ENCODE measurements at regions of chr2 and their contacts with region 1.

Region 1: DNA sequence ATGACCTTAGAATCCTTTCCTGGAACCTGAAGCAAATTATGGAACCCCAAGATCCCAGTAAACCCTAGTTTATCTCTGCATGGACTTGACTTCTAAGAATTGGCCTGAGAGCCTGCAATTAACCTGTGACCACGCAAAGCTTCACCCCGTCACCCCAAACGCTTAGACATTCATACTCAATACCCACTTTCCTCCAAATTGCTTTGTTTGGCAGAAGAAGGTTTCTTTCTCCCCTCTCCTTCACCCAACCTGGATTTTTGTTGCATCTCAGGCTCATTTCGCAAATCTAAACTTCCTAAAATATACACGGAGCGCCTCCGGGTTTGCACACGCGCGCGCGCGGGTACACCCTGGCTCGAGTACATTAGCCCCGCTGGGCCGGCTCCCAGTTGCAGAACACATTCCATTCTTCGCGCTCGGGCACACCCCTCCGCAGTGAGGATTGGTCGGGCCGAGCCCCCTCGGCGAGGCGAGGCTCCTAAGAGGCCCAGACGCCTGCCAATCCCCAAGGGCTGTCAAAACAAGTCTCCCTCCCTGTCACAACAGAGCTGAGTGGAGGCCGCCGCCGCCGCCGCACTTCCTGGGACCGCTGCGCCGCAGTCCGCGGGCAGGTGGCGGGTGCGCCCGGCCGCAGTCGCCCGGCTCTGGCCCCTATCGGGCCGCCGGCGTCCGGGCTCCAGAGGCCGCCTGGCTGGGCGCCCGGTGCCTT is at the start of gene PLCL1:
- DNase-seq: peak; percentile 89
- H3K4me3 ChIP-seq: peak within 1 kb of the TSS; percentile 66
- H3K27ac ChIP-seq: no peak within 1 kb of the TSS
- H3K4me1 ChIP-seq: peaks cover 4% of the 10 kb centered on the region
- CTCF ChIP-seq: no peak
- total RNA-seq, gene PLCL1: 0.03 and 0.08 TPM in 2 replicates

Region 2: DNA sequence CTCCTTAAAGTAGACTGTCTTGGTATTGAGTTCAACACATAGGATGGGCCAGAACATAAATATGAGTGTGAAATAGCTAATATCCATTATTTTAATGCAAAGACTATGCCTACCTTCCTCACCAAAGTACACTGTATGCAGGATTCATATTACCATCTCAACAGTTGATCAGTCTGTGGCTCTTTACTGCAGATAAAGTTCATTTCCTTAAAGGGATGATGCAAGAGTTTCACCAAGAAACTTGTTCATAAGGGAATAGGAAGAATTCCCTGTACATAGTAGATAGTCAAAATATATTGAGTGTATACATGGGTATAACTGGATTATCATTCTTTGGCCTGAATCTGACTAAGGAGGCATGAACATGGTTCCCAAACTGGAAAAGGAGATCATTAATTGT is 64.0 kb before region 1 on chr2:
- CTCF ChIA-PET with region 1: no interaction called
- POLR2A ChIA-PET with region 1: no interaction called
- intact Hi-C with region 1: no loop called
- DNase-seq: no peak
- H3K4me3 ChIP-seq: no peak overlapping the region
- H3K27ac ChIP-seq: no peak overlapping the region
- H3K4me1 ChIP-seq: no peaks in the 10 kb centered on the region
- CTCF ChIP-seq: no peak

Region 3: GRCh38 chr2:197777823-197778407 is 26.3 kb before region 1 on chr2:
- CTCF ChIA-PET with region 1: no interaction called
- POLR2A ChIA-PET with region 1: no interaction called
- intact Hi-C with region 1: no loop called
- DNase-seq: peak; percentile 47
- H3K4me3 ChIP-seq: no peak overlapping the region
- H3K27ac ChIP-seq: no peak overlapping the region
- H3K4me1 ChIP-seq: no peaks in the 10 kb centered on the region
- CTCF ChIP-seq: peak; percentile 98

Region 4: DNA sequence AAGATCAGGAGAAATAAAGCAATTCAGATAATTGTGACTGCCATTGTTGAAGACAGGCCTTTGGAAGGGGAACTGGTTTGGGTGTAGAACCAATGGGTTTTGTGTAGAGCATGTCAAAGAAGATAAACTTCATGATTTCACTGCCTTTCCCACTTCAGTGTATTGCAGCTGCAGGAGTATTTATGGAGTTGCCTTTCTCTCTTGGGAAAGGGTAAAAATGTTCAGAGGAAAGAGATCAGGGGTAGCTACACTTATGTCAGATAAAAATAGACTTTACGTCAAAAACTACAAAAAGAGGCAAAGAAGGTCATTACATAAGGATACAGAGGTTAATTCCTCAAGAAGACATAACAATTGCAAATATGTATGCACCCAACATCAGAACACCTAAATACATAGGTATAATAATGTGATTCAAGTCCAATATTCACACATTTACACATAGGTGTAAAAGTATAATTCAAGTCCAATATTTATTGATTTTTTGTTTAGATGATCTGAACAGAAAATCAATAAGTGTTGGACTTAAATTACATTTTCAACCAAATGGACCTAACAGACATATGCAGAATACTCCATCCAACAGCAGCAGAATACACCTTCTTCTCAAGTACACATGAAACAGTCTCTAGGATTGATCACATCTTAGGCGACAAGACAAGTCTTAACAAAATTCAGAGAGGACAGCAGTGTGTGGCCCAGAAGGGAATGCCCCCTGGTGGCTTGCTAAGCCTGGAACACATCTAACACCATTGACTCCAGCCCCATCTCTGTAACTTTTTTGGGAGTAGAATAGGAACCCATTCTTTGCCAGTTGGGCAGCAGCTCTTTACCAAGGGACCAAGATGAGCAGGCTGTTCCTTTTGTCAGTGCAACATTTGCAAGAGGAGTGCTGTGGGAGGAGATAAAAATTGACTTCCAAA is 249.8 kb after region 1 on chr2:
- CTCF ChIA-PET with region 1: no interaction called
- POLR2A ChIA-PET with region 1: no interaction called
- intact Hi-C with region 1: loop called (anchors 5 kb)
- DNase-seq: peak; percentile 7
- H3K4me3 ChIP-seq: no peak overlapping the region
- H3K27ac ChIP-seq: no peak overlapping the region
- H3K4me1 ChIP-seq: no peaks in the 10 kb centered on the region
- CTCF ChIP-seq: peak; percentile 66

Region 5: DNA sequence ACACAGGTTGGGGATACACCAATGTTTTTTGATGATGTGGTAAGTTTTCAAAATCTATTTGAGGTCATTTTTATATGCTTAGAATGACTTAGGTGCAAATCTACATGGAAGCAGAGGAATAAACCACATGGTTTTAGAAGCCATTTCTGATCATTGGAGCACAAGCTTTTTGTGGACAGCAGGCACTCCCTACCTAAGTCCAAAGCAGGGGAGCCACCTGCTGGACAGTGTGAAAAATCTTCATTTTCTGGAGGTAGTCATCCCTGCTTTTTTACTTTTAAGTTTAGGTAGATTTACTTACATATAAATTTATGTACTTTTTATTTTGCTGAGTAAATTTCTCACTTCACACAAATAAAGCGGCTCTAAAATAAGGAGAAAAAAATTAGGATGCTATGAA is 323.4 kb after region 1 on chr2:
- CTCF ChIA-PET with region 1: no interaction called
- POLR2A ChIA-PET with region 1: no interaction called
- intact Hi-C with region 1: loop called (anchors 1 kb)
- DNase-seq: peak; percentile 53
- H3K4me3 ChIP-seq: no peak overlapping the region
- H3K27ac ChIP-seq: no peak overlapping the region
- H3K4me1 ChIP-seq: no peaks in the 10 kb centered on the region
- CTCF ChIP-seq: peak; percentile 85

Region 6: GRCh38 chr2:198296665-198297308 is 492.6 kb after region 1 on chr2:
- CTCF ChIA-PET with region 1: interaction called, 3 read pairs
- POLR2A ChIA-PET with region 1: interaction called, 3 read pairs
- intact Hi-C with region 1: loop called (anchors 1 kb)
- DNase-seq: peak; percentile 74
- H3K4me3 ChIP-seq: no peak overlapping the region
- H3K27ac ChIP-seq: no peak overlapping the region
- H3K4me1 ChIP-seq: peaks cover 6% of the 10 kb centered on the region
- CTCF ChIP-seq: peak; percentile 84

Region 7: DNA sequence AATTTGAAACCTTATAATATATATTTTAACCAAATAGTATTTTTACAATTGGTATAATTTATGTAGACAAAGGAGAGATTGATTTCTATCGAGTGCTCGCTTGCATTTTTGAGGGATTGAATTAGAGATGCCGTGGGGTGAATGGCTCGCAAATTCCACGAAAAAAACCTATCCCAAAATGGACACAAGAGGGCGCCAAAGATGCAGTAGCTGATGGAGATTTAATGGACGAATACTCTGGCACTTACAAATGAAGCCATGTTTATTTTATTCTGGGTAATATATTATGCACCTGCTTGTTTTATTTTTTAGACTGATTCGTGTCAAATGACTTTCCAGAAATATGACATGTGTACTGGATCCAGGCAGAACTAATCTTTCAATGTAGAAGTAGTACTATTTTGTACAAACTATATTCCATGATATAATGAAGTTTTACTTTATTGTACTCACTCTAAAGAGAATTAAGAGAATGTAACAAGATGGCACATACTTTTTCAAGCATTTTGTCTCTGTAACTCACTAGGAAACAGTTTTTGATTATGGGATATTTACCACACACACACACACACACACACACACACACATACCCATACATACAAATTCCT is 505.6 kb after region 1 on chr2:
- CTCF ChIA-PET with region 1: no interaction called
- POLR2A ChIA-PET with region 1: no interaction called
- intact Hi-C with region 1: no loop called
- DNase-seq: peak; percentile 72
- H3K4me3 ChIP-seq: no peak overlapping the region
- H3K27ac ChIP-seq: no peak overlapping the region
- H3K4me1 ChIP-seq: peaks cover 13% of the 10 kb centered on the region
- CTCF ChIP-seq: peak; percentile 96

Measured in OCI-LY7 (cell line).